ENCODE measurements at regions of chr1 and their contacts with region 1.

Region 1: GRCh38 chr1:154974063-154974807 is at the start of gene CKS1B:
- DNase-seq: peak; percentile 99 to 100 (median 100)
- H3K4me3 ChIP-seq: peak within 1 kb of the TSS; percentile 61 to 95 (median 92)
- H3K4me3 Mint-ChIP-seq: no peak within 1 kb of the TSS
- H3K27ac ChIP-seq: peak within 1 kb of the TSS; percentile 94 to 98
- H3K27ac Mint-ChIP-seq: no peak within 1 kb of the TSS
- H3K4me1 ChIP-seq: peaks cover 49 to 56% of the 10 kb centered on the region in 2 donors
- H3K4me1 Mint-ChIP-seq: peaks cover 42% of the 10 kb centered on the region
- H3K27me3 ChIP-seq: no peaks in the 10 kb centered on the region
- H3K27me3 Mint-ChIP-seq: peaks cover 0 to 3% (median 0%) of the 10 kb centered on the region in 3 donors
- CTCF ChIP-seq: no peak
- polyA plus RNA-seq, gene CKS1B: 9.4 to 22.6 (median 18.0) TPM

Region 2: DNA sequence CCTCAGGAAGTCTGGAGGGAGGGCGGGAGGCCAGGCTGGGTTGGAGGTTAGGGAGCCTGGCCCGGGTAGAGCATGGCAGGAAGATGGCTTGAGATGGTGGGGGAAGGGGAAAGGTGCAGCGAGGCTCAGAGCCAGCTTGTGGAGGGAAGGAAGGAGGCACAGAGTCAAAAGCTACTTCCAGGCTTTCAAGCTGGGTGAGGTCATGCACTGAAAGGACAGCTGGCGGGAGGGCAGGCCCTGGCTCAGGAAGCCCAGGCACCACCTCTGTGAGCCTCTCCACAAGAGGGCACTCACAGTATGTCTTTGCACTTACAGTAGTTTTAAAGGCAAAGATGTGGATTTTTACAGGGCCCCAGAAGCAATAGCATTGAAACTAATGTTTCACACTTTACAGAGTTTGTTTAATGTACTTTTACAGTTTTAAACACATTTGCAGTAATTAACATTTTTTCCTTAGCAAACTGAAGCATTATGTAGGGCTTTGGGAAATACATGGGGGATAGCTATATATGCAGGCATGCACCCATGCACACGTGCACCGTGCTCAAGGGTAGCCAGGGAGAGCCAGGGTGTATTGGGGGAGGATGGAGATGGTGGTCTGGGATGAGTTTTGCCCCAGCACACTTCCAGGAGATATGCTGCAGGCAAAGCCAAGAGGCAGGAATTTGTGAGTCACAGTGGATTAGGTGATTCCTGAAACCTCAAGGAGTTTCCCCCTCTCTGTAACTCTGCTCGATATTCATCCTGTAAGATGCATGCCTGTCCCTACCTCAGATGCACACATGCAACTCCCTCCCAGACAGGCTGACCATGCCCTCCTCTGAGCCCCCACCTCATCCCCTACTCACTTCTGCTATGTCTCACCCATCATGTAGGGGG is 70.8 kb after region 1 on chr1:
- intact Hi-C with region 1: loop called in 1 of 2 experiments (anchors 5 kb)
- DNase-seq: peak; percentile 70 to 79 (median 77)
- H3K4me3 ChIP-seq: no peak overlapping the region
- H3K4me3 Mint-ChIP-seq: peak overlapping the region in 1 of 2 donors; percentile 57
- H3K27ac ChIP-seq: no peak overlapping the region
- H3K27ac Mint-ChIP-seq: peak overlapping the region in 4 of 7 donors; percentile 19 to 81 (median 50)
- H3K4me1 ChIP-seq: peaks cover 8 to 16% of the 10 kb centered on the region in 2 donors
- H3K4me1 Mint-ChIP-seq: peaks cover 16% of the 10 kb centered on the region
- H3K27me3 ChIP-seq: no peaks in the 10 kb centered on the region
- H3K27me3 Mint-ChIP-seq: peaks cover 2 to 7% (median 4%) of the 10 kb centered on the region in 3 donors
- CTCF ChIP-seq: peak; percentile 75

Region 3: DNA sequence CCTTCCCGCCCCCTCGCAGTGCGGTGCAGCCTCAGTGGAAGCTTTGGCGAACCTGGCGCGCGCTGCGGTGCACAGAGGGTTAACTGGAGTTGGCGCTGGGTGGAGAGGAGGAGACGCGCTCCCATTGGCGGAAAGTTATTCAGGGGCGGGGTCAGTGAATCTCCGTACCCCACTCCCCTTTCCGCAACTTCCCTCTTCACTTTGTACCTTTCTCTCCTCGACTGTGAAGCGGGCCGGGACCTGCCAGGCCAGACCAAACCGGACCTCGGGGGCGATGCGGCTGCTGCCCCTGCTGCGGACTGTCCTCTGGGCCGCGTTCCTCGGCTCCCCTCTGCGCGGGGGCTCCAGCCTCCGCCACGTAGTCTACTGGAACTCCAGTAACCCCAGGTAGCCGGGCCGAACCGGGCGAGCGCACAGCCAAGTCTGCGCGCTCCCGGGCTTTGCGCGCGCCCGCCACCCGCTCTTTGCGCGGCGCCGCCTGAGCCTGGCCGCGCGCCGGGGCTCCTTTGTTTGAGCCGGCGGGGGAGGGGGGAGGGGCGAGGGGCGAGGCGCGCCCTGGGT is 89.4 kb after region 1 on chr1 and contains the start of gene EFNA4:
- intact Hi-C with region 1: loop called in 1 of 2 experiments (anchors 5 kb)
- DNase-seq: peak; percentile 85 to 90 (median 87)
- H3K4me3 ChIP-seq: peak within 1 kb of the TSS; percentile 62 to 89 (median 77)
- H3K4me3 Mint-ChIP-seq: peak within 1 kb of the TSS; percentile 81 to 94
- H3K27ac ChIP-seq: peak within 1 kb of the TSS; percentile 36 to 72
- H3K27ac Mint-ChIP-seq: peak within 1 kb of the TSS; percentile 15 to 90 (median 82)
- H3K4me1 ChIP-seq: peaks cover 26 to 41% of the 10 kb centered on the region in 2 donors
- H3K4me1 Mint-ChIP-seq: peaks cover 33% of the 10 kb centered on the region
- H3K27me3 ChIP-seq: peaks cover 0 to 5% of the 10 kb centered on the region in 2 donors
- H3K27me3 Mint-ChIP-seq: peaks cover 6 to 10% (median 9%) of the 10 kb centered on the region in 3 donors
- CTCF ChIP-seq: no peak
- polyA plus RNA-seq, gene EFNA4: 2.3 to 8.0 (median 4.1) TPM